Left cardiac atrium (tissue), 4 donors: ENCODE measurements at regions of chr12 and their contacts with region 1.

Region 1: DNA sequence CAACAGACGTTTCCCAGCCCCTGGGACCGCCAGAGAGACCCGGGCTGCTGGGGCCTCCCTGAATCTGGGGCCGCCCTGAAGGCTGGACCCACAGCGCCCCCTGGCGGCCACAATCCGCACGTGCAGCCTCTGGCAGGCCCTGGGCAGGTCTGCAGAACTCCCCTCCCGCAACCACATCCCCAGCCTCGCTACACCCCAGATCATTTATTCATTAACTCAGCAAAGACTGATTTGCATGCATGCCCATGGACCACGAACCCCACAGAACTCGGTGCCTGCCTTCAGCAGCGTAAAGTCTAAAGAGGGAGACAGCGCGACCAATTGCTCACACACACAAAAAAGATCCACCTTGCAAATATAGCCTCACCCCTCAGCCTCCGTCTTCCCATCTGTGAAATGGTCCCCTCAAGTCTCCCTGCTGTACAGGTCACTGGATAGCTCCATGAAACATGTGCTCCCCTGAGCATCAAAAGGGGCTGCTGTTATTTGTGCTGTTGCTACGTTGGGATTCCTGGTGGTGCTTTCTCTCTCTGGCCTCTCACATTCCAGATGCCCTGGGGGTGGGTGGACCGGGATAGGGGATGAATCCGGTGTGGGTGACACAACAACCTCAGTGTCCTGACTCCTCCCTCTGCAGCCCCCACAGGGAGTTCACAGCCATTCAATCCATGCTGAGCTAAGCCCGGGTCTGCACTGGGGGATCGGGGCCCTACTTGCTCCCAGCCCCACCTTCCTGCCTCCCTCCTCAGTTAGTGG is 96.4 kb downstream of the SCARB1 start:
- DNase-seq: peak; percentile 86
- ATAC-seq: peak; percentile 78 to 82

Region 2: DNA sequence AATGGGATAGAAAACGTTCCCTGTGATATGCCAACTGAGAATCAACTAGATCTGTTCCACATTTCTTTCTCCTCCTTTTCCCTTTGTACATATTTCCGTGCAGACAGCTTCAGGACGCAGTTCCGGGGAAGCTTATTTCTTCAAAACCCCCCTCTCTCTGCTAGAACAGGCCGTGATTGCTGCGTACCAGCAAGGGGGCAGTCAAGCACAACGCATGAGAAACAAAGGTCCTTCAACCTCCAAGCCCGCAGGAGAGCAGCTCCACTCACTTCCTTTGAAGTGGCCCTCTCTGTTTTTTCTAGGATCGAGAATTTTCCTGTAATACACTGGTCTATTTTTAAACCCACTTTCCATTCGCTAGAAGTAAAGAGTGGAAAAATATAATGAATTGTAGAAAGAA is 713.4 kb before region 1 on chr12:
- intact Hi-C with region 1: loop called in 1 of 2 experiments (anchors 1 kb)
- DNase-seq: peak; percentile 60
- ATAC-seq: peak; percentile 90 to 95

Region 3: GRCh38 chr12:124518051-124518932 is 249.0 kb before region 1 on chr12:
- intact Hi-C with region 1: loop called in 1 of 2 experiments (anchors 5 kb)
- DNase-seq: peak; percentile 98
- ATAC-seq: peak; percentile 72 to 75

Region 4: GRCh38 chr12:124578445-124578844 is 188.8 kb before region 1 on chr12:
- intact Hi-C with region 1: loop called in 1 of 2 experiments (anchors 10 kb)
- DNase-seq: no peak
- ATAC-seq: no peak

Region 5: GRCh38 chr12:124673801-124674617 is 93.2 kb before region 1 on chr12:
- intact Hi-C with region 1: no loop called
- DNase-seq: no peak
- ATAC-seq: no peak